T-cell (primary cell): ENCODE measurements at regions of chr19 and their contacts with region 1.

Region 1: GRCh38 chr19:16041299-16041990 is 34.9 kb upstream of the TPM4 start:
- DNase-seq: peak in 34 of 35 experiments; percentile 30 to 82 (median 64)
- ATAC-seq: peak; percentile 75 to 87 (median 82)
- H3K4me3 ChIP-seq: peak overlapping the region in 1 of 2 donors; percentile 29
- H3K4me3 Mint-ChIP-seq: peak overlapping the region in 2 of 3 donors; percentile 17 to 44
- H3K27ac ChIP-seq: no peak overlapping the region
- H3K27ac Mint-ChIP-seq: no peak overlapping the region
- H3K4me1 ChIP-seq: peaks cover 0 to 8% of the 10 kb centered on the region in 2 experiments
- H3K4me1 Mint-ChIP-seq: peaks cover 0 to 17% (median 13%) of the 10 kb centered on the region in 3 donors
- H3K27me3 ChIP-seq: peaks cover 0 to 16% of the 10 kb centered on the region in 2 experiments
- H3K27me3 Mint-ChIP-seq: no peaks in the 10 kb centered on the region

Region 2: DNA sequence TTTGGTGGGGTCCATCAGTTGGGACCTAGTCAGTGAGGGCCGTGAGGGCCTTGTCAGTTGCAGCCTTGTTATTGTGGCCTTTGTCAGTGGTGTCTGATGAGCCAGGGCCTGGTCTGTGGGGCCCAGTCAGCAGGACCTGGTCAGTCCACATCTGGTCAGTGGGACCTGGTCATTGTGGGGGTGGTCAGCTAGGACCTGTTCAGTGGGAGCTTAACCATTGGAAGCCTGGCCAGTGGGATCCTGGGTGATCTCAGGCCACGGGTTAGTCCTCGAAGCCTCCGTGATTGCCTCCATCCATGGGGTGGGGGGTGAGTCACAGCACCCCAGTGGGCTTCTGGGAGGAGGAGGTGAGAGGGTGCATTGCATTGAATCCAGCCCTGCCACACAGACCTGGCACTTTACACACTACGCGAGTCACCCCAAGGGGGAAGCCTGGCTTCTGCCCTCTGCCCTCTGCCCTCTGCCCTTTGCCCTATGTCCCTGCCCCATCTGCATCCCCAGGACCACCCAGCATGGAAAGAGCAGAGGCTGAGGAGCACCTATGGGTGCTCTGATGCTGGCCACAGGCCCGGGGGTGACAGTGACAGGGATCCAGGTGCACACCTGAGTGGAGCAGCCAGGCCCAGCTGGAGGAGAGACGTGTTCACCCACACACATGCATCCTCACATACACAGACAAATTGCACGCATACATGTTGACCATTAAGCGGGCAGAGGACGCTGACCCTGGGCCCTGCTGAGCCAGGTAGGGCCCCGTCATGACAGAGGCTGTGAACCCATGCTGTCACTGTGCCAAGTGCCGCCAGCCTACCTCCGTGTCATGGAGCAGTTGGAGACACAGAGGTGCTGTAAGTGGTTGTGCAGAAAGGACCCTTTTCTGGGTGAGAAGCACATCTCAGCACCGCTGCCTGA is 25.0 kb before region 1 on chr19:
- CTCF ChIA-PET with region 1: no interaction called
- POLR2A ChIA-PET with region 1: no interaction called
- DNase-seq: peak in 1 of 35 experiments; percentile 19
- ATAC-seq: no peak
- H3K4me3 ChIP-seq: no peak overlapping the region
- H3K4me3 Mint-ChIP-seq: no peak overlapping the region
- H3K27ac ChIP-seq: no peak overlapping the region
- H3K27ac Mint-ChIP-seq: no peak overlapping the region
- H3K4me1 ChIP-seq: no peaks in the 10 kb centered on the region
- H3K4me1 Mint-ChIP-seq: no peaks in the 10 kb centered on the region
- H3K27me3 ChIP-seq: peaks cover 0 to 17% of the 10 kb centered on the region in 2 experiments
- H3K27me3 Mint-ChIP-seq: no peaks in the 10 kb centered on the region

Region 3: GRCh38 chr19:16027528-16027927 is 13.9 kb before region 1 on chr19:
- CTCF ChIA-PET with region 1: no interaction called
- POLR2A ChIA-PET with region 1: no interaction called
- DNase-seq: peak in 1 of 35 experiments; percentile 15
- ATAC-seq: no peak
- H3K4me3 ChIP-seq: no peak overlapping the region
- H3K4me3 Mint-ChIP-seq: no peak overlapping the region
- H3K27ac ChIP-seq: no peak overlapping the region
- H3K27ac Mint-ChIP-seq: no peak overlapping the region
- H3K4me1 ChIP-seq: no peaks in the 10 kb centered on the region
- H3K4me1 Mint-ChIP-seq: no peaks in the 10 kb centered on the region
- H3K27me3 ChIP-seq: peaks cover 0 to 4% of the 10 kb centered on the region in 2 experiments
- H3K27me3 Mint-ChIP-seq: peaks cover 0 to 3% of the 10 kb centered on the region in 2 donors

Region 4: GRCh38 chr19:16057062-16057461 is 15.6 kb after region 1 on chr19:
- CTCF ChIA-PET with region 1: interaction called in 1 of 2 experiments, 3 read pairs
- POLR2A ChIA-PET with region 1: interaction called in 1 of 2 experiments, 10 read pairs
- DNase-seq: no peak
- ATAC-seq: no peak
- H3K4me3 ChIP-seq: no peak overlapping the region
- H3K4me3 Mint-ChIP-seq: no peak overlapping the region
- H3K27ac ChIP-seq: no peak overlapping the region
- H3K27ac Mint-ChIP-seq: no peak overlapping the region
- H3K4me1 ChIP-seq: peaks cover 0 to 5% of the 10 kb centered on the region in 2 experiments
- H3K4me1 Mint-ChIP-seq: peaks cover 4 to 16% (median 5%) of the 10 kb centered on the region in 3 donors
- H3K27me3 ChIP-seq: peaks cover 0 to 6% of the 10 kb centered on the region in 2 experiments
- H3K27me3 Mint-ChIP-seq: peaks cover 3% of the 10 kb centered on the region in 2 donors

Region 5: GRCh38 chr19:16062789-16063188 is 21.3 kb after region 1 on chr19:
- CTCF ChIA-PET with region 1: interaction called in 1 of 2 experiments, 3 read pairs
- POLR2A ChIA-PET with region 1: interaction called in 1 of 2 experiments, 10 read pairs
- DNase-seq: peak in 33 of 35 experiments; percentile 24 to 83 (median 62)
- ATAC-seq: peak; percentile 41 to 74 (median 49)
- H3K4me3 ChIP-seq: no peak overlapping the region
- H3K4me3 Mint-ChIP-seq: no peak overlapping the region
- H3K27ac ChIP-seq: no peak overlapping the region
- H3K27ac Mint-ChIP-seq: no peak overlapping the region
- H3K4me1 ChIP-seq: peaks cover 0 to 23% of the 10 kb centered on the region in 2 experiments
- H3K4me1 Mint-ChIP-seq: peaks cover 16 to 32% (median 18%) of the 10 kb centered on the region in 3 donors
- H3K27me3 ChIP-seq: peaks cover 0 to 9% of the 10 kb centered on the region in 2 experiments
- H3K27me3 Mint-ChIP-seq: peaks cover 3% of the 10 kb centered on the region in 2 donors